Heart left ventricle (tissue), 16 donors: ENCODE measurements at regions of chr1 and their contacts with region 1.

Region 1: DNA sequence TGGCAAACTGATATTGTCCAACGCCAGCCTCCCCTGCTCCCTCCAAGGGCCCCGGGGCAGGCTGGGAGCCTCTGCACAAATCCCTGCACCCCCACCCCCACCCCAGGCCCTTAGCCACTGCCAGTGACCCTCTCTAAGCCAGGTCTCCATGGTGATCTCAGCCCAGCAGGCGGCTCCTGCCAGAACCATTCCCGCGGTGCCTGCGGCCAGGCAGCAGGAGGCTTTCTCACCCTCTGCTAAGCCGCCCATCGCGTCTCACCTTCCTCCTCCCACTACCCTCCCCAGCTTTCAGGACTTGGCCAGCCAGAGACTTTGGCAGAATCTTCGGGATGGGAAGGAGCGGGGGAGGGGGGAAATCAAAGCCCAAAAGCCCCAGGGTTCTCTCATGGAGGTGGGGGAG is 46.8 kb upstream of the WASF2 start:
- DNase-seq: peak; percentile 75 to 87 (median 79)
- ATAC-seq: peak; percentile 55 to 87 (median 86)
- H3K4me3 ChIP-seq: no peak overlapping the region
- H3K27ac ChIP-seq: peak overlapping the region in 11 of 12 donors; percentile 65 to 94 (median 78)
- H3K4me1 ChIP-seq: peaks cover 12 to 64% (median 47%) of the 10 kb centered on the region in 12 donors
- H3K27me3 ChIP-seq: no peaks in the 10 kb centered on the region
- CTCF ChIP-seq: peak in 1 of 12 donors; percentile 2
- POLR2A ChIP-seq: no peak

Region 2: GRCh38 chr1:27402349-27402754 is 134.4 kb before region 1 on chr1:
- intact Hi-C with region 1: loop called in 1 of 10 experiments (anchors 5 kb)
- DNase-seq: peak; percentile 68 to 87 (median 83)
- ATAC-seq: peak; percentile 38 to 57 (median 42)
- H3K4me3 ChIP-seq: no peak overlapping the region
- H3K27ac ChIP-seq: peak overlapping the region; percentile 76 to 87 (median 85)
- H3K4me1 ChIP-seq: peaks cover 27 to 96% (median 80%) of the 10 kb centered on the region in 12 donors
- H3K27me3 ChIP-seq: no peaks in the 10 kb centered on the region
- CTCF ChIP-seq: peak; percentile 42 to 70 (median 60)
- POLR2A ChIP-seq: no peak

Region 3: GRCh38 chr1:28480308-28480707 is 943.5 kb after region 1 on chr1:
- intact Hi-C with region 1: no loop called
- DNase-seq: no peak
- ATAC-seq: no peak
- H3K4me3 ChIP-seq: no peak overlapping the region
- H3K27ac ChIP-seq: no peak overlapping the region
- H3K4me1 ChIP-seq: no peaks in the 10 kb centered on the region
- H3K27me3 ChIP-seq: no peaks in the 10 kb centered on the region
- CTCF ChIP-seq: no peak
- POLR2A ChIP-seq: no peak